Posterior vena cava (tissue), 2 donors: ENCODE measurements at regions of chr6 and their contacts with region 1.

Region 1: DNA sequence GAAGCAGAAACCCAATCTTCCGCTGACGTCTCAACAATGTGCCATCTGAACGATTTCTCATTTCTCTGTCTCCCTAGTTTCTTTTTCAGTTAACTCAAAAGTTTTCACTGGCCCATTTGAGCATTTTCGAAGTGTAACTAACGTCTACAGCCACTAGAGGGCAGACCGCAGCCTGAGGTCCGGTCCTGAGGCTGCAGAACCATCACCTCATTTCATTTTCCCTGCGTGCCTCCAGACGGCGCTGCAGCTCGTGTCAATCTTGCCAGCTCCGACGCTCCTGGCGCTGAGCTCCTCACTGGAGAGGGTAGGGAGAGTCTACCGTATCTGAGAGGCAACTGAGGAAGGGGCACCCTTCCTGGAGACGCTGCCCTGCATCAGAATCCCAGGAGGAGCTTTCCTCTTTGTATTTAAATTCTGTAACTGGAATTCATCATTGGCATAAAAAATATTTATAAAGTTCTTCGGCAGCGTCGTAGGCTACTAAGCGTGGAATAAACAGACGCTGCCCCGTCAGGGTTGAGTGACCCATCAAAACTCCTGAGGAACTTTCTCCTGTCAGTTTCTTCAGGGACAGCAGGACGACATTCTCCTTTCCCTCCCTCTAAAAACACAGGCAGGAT is 28.5 kb upstream of the DTNBP1 start:
- DNase-seq: peak; percentile 94

Region 2: DNA sequence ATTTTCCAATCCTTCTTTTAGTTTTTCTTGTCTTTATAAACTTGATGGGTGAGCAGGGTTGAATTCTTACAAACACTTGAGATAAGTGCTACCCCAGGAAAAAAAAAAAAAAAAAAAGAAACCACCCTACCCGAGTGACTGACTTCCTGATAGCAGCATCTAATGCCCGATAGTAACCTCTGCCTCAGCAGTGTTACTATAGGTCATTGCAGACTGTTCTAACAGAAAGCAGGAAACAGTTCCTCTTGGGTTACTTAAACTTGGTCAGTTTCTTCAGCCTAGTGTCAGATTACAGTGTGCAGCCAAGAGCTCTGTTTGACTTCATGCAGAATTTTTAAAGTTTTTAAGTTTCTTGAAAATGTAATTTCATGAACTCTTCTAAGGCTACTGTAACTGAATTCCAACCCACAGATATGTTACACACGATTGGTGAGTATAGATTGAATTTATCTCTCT is 439.6 kb after region 1 on chr6:
- intact Hi-C with region 1: loop called in 1 of 2 experiments (anchors 5 kb)
- DNase-seq: no peak

Region 3: DNA sequence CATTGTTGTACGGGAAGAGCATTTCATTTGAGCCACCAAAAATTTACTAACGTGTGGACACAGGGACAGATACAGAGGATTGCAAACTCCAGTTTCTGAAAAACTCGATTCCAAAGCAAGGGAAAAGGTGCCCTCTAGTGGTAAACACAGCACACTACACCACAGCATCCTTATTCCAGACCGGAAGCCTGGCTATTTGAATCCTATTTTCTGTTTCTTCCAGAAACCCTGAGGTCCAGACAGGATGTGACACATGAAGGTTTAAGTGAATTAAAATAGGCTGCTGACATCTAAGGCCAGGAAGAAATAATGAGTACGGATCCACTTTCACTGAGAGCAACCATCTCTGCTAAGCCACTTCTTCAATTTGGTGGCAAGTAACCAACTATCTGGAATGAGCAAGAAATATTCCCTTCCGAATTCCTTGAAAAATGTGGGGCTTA is 515.3 kb after region 1 on chr6:
- intact Hi-C with region 1: loop called in 1 of 2 experiments (anchors 5 kb)
- DNase-seq: no peak